Left colon (tissue), 2 donors: ENCODE measurements at regions of chr15 and their contacts with region 1.

Region 1: DNA sequence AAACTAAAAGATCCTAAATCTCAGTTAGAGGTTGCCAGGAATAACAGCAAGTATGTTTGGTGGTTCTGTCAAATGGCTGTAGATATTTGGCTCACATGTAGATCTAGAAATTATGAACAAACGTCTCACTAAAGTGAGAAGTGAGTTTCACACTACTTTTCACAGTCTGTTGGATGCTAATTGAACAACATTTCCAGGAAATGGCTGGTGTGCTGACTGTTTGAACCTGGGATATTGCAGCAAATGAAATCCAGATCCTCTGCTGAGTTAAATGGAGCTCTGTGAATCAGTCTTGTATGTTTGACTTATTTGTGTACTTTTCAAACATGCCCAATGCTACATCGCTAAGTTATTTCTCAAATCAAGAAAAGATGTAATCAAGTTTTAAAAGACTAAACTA is 21.3 kb upstream of the RSL24D1 start:
- DNase-seq: no peak
- ATAC-seq: no peak

Region 2: DNA sequence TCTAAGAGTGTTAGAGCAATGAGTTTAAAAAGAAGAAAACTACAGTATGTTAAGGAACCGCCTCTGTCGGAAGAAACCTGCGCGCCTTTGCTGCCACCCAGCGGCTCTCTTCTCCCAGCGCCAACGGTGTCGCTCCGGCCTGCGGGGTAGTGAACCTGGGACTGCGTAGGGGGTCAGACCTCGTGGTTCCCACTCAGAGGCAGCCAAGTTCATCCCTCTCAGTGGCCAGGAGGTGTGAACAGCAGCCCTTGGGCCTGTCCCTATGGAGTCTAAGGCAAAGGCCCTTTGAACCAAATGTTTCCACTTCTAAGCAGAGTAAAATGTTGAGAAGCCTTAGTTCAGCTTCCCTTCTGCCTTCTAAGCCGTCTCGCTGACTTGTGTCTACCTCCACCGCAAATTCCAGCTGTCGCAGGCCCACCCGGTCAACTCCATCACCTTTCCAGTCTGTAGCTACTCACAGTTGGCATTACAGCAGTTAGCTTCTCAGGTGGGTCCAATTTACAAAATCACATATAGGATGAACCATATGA is 72.5 kb after region 1 on chr15:
- intact Hi-C with region 1: loop called (anchors 5 kb)
- DNase-seq: peak; percentile 78 to 90
- ATAC-seq: peak; percentile 82

Region 3: DNA sequence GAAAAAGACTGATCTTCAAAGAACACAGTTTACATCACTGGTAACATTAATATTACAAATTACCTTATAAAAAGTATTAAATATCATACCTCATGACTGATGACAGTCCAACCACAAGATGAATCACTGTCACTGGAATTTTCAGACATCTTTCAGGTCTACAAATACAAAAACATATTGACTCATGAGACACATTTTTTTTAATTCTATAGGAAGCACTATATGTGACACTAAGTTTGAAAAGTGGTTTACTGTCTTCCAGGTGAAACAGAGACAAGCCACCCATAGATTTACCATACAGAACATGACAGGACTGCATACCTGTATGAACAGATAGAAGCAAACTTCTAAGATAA is 171.2 kb after region 1 on chr15:
- intact Hi-C with region 1: no loop called
- DNase-seq: no peak
- ATAC-seq: no peak